Right ventricle myocardium superior (tissue), 1 donor: ENCODE measurements at regions of chr2 and their contacts with region 1.

Region 1: DNA sequence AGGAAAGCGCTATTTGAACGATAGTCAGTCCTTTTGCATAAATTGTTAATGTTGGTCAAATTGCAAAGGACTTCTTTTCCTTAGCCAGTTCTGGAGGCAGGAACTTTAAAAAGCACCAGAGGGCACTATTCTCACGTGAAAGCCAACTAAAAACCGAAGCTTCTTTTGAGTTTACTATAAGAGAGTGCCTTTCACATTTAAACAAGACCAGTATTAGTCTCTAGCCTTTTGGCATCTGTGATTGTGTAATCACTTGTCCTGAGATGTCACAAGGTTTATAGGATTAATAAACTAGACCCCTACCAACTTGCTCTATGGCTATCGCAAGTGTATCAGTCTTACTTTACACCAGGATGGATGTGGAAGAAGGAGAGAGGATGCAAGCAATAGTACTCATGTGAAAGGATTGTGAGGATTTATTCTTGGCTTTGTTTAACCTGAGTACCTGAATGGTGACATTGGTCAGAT is 14.4 kb upstream of the STAT4 start:
- DNase-seq: no peak
- ATAC-seq: peak; percentile 89

Region 2: GRCh38 chr2:191070276-191070675 is 94.9 kb before region 1 on chr2:
- intact Hi-C with region 1: no loop called
- DNase-seq: no peak
- ATAC-seq: no peak

Region 3: DNA sequence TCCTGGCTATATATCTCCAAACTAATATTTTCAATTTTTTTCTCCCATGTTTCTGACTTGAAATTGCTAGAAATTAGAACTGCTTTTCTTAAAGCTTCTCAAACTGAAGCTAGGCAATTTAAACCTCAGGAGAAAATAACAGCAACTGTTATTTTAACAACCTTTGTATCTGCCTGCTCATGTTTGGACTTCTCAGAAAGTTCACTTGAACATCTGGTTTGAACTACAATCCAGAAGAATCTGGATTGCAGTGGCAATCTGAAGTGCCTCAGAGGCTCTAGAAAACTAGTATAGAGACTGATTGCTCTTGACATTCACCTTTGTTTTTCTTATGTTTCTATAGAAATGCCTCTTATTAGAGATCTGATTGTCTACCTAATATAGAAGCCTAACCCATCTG is 78.5 kb before region 1 on chr2:
- intact Hi-C with region 1: no loop called
- DNase-seq: no peak
- ATAC-seq: no peak

Region 4: GRCh38 chr2:191515551-191515950 is 350.3 kb after region 1 on chr2:
- intact Hi-C with region 1: loop called (anchors 5 kb)
- DNase-seq: no peak
- ATAC-seq: peak; percentile 77

Region 5: DNA sequence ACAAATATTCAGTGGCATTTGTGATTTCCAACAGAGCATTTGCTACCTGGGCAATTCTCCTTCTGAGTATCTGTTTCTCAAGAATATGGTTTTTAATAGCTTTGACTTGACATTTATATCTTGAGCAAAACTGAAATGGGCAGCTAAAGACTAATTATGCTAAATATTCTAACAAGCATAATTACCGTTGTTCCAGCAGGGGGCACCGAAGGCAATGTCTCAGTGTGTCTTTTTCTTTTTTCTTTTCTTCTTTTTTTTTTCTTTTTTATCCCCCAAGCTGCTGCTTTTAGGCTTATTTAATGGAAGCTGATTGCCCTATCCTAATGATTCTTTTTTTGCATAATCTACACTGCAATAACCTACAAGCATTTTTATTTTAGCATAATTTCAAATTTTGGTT is 373.9 kb after region 1 on chr2:
- intact Hi-C with region 1: no loop called
- DNase-seq: no peak
- ATAC-seq: no peak